ENCODE measurements at regions of chr11 and their contacts with region 1.

Region 1: DNA sequence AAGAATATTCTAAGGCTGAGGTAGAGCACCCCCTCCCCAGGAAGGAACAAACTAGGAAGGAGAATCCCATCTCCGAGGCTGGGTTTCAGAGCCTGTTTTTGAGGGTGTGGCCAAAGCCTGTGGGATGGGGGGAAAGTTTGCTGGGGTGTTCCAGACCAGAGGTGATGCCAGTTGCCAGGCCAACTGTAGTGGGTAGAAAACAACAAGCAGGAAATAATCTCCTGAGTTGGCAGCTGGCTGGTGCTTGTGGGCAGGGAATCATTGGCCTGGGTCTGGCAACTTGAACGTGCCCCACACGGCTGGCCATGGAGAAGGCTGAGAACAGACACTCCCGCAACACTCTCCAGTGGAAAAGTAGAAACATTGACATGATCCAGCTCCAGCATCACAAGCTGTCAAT is 385.6 kb downstream of the ETS1 start:
- DNase-seq: no peak
- ATAC-seq: no peak
- H3K4me3 ChIP-seq: no peak overlapping the region
- H3K4me3 Mint-ChIP-seq: no peak overlapping the region
- H3K27ac ChIP-seq: no peak overlapping the region
- H3K27ac Mint-ChIP-seq: no peak overlapping the region
- H3K4me1 ChIP-seq: peaks cover 2% of the 10 kb centered on the region
- H3K4me1 Mint-ChIP-seq: no peaks in the 10 kb centered on the region
- H3K27me3 ChIP-seq: no peaks in the 10 kb centered on the region
- H3K27me3 Mint-ChIP-seq: no peaks in the 10 kb centered on the region
- CTCF ChIP-seq: no peak

Region 2: GRCh38 chr11:128116885-128117284 is 84.9 kb before region 1 on chr11:
- CTCF ChIA-PET with region 1: no interaction called
- POLR2A ChIA-PET with region 1: no interaction called
- intact Hi-C with region 1: no loop called
- DNase-seq: no peak
- ATAC-seq: no peak
- H3K4me3 ChIP-seq: no peak overlapping the region
- H3K4me3 Mint-ChIP-seq: no peak overlapping the region
- H3K27ac ChIP-seq: no peak overlapping the region
- H3K27ac Mint-ChIP-seq: no peak overlapping the region
- H3K4me1 ChIP-seq: no peaks in the 10 kb centered on the region
- H3K4me1 Mint-ChIP-seq: no peaks in the 10 kb centered on the region
- H3K27me3 ChIP-seq: no peaks in the 10 kb centered on the region
- H3K27me3 Mint-ChIP-seq: no peaks in the 10 kb centered on the region
- CTCF ChIP-seq: no peak

Region 3: GRCh38 chr11:128271401-128271800 is 69.6 kb after region 1 on chr11:
- CTCF ChIA-PET with region 1: no interaction called
- POLR2A ChIA-PET with region 1: no interaction called
- intact Hi-C with region 1: loop called (anchors 5 kb)
- DNase-seq: peak in 3 of 14 experiments; percentile 61 to 81 (median 64)
- ATAC-seq: peak; percentile 65
- H3K4me3 ChIP-seq: no peak overlapping the region
- H3K4me3 Mint-ChIP-seq: peak overlapping the region; percentile 3
- H3K27ac ChIP-seq: peak overlapping the region in 1 of 2 donors; percentile 51
- H3K27ac Mint-ChIP-seq: peak overlapping the region; percentile 85
- H3K4me1 ChIP-seq: peaks cover 8% of the 10 kb centered on the region
- H3K4me1 Mint-ChIP-seq: peaks cover 35% of the 10 kb centered on the region
- H3K27me3 ChIP-seq: no peaks in the 10 kb centered on the region
- H3K27me3 Mint-ChIP-seq: no peaks in the 10 kb centered on the region
- CTCF ChIP-seq: no peak

Region 4: DNA sequence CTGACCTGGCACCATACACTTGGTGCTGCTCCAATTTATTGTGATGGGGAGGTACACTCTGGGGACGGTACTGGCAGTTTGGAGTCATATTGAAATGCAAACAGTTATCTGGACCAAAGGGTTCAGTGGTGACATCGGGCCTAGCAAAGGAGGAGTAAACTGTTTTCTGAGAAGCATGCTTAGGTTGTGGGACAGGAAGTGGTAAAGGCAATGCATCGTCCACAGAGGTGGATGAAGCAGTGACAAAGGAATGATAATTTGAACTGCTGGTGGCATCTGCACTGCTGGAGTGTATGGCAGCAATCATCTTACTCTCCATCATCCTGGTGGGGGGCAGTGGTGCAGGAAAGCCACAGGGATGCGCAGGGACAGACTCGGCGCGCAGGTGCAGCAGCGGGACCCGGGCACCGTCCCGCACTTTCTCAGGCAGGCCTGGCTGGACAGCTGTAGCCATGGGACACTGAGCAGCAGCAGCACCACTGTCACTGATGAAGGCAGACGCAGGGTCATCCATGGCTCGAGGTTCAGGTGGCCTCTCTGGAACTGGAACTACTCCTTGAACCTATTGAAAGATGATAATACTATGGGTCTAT is 768.9 kb after region 1 on chr11:
- CTCF ChIA-PET with region 1: no interaction called
- POLR2A ChIA-PET with region 1: no interaction called
- intact Hi-C with region 1: no loop called
- DNase-seq: no peak
- ATAC-seq: no peak
- H3K4me3 ChIP-seq: no peak overlapping the region
- H3K4me3 Mint-ChIP-seq: no peak overlapping the region
- H3K27ac ChIP-seq: no peak overlapping the region
- H3K27ac Mint-ChIP-seq: no peak overlapping the region
- H3K4me1 ChIP-seq: peaks cover 6% of the 10 kb centered on the region
- H3K4me1 Mint-ChIP-seq: peaks cover 2% of the 10 kb centered on the region
- H3K27me3 ChIP-seq: no peaks in the 10 kb centered on the region
- H3K27me3 Mint-ChIP-seq: no peaks in the 10 kb centered on the region
- CTCF ChIP-seq: no peak

Measured in CD4-positive, alpha-beta T cell (primary cell).